A549 (cell line): ENCODE measurements at regions of chr16 and their contacts with region 1.

Region 1: DNA sequence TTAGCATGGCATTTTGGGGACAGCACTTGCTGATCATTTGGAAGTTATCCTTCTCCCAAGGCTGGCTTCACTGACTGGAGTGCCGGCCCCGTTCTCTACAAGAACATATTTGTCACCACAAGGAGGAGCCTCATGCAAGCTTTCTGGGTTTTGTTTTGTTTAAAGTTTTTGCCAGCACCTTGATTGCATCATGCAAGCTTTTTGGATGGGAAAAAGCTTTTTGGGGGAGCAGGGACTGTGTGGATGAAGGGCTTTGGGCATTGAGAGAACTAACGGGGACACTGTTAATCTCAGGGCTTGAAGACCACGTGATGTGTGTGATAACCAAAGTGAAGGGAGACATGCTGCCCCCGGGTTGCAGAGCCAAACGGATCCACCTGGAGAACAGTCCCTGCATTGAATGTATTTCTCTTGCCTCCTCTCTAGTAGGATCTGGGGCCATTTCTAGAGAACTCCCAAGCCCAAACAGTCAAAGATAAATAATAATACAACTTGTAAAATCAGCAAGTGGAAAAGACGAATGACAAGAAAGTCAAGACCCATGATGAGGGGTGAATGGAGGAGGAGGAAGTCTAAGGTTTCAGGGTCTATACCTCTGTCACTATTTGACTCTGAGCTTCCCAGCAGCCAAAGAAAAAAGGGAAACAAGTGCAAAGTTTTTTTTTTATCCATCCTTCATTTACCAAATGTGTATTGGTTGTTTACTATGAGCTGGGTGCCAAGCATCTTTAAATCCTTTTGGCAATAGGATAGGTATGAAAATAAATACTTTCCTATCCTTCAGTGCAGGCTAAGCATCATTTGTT is 17.2 kb downstream of the TMEM114 start:
- DNase-seq: peak; percentile 38 to 53
- ATAC-seq: peak; percentile 54 to 68; a peak in 2 of 6 replicates
- H3K4me3 ChIP-seq: peak overlapping the region; percentile 34; the same call in 2 of the 3 replicates
- H3K27ac ChIP-seq: peak overlapping the region; percentile 55 to 73; a peak in 4 of 6 replicates
- H3K4me1 ChIP-seq: peaks cover 10% of the 10 kb centered on the region; the same call in 2 of the 3 replicates
- CTCF ChIP-seq: peak; percentile 54
- EP300 ChIP-seq: no peak
- POLR2A ChIP-seq: no peak
- RAD21 ChIP-seq: peak; percentile 45 to 51

Region 2: DNA sequence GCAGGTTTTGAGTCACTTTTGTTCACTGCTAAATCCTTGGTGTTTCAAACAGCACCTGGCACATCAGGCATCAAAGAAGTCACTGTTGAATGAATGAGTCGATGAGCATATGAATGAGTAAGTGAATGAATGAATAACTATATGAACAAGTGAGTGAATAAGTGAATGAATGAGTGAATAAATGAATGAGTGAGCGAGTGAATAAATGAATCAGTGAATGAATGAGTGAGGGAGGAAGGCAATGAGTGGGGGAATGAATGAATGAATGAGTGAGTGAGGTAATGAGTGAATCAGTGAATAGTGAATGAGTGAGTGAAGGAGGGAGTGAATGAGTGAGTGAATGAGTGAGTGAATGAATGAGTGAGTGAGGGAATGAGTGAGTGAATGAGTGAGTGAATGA is 11.6 kb before region 1 on chr16:
- CTCF ChIA-PET with region 1: no interaction called
- POLR2A ChIA-PET with region 1: no interaction called
- DNase-seq: no peak
- ATAC-seq: no peak
- H3K4me3 ChIP-seq: no peak overlapping the region
- H3K27ac ChIP-seq: no peak overlapping the region
- H3K4me1 ChIP-seq: no peaks in the 10 kb centered on the region
- CTCF ChIP-seq: no peak
- EP300 ChIP-seq: no peak
- POLR2A ChIP-seq: no peak
- RAD21 ChIP-seq: no peak

Region 3: GRCh38 chr16:8634991-8635736 is 62.0 kb after region 1 on chr16:
- CTCF ChIA-PET with region 1: interaction called, 25 read pairs
- POLR2A ChIA-PET with region 1: no interaction called
- DNase-seq: peak; percentile 48 to 64
- ATAC-seq: peak; percentile 87 to 93
- H3K4me3 ChIP-seq: no peak overlapping the region
- H3K27ac ChIP-seq: no peak overlapping the region
- H3K4me1 ChIP-seq: no peaks in the 10 kb centered on the region
- CTCF ChIP-seq: peak; percentile 61
- EP300 ChIP-seq: no peak
- POLR2A ChIP-seq: no peak
- RAD21 ChIP-seq: peak in 1 of 2 experiments; percentile 47; a peak in 3 of 5 replicates

Region 4: DNA sequence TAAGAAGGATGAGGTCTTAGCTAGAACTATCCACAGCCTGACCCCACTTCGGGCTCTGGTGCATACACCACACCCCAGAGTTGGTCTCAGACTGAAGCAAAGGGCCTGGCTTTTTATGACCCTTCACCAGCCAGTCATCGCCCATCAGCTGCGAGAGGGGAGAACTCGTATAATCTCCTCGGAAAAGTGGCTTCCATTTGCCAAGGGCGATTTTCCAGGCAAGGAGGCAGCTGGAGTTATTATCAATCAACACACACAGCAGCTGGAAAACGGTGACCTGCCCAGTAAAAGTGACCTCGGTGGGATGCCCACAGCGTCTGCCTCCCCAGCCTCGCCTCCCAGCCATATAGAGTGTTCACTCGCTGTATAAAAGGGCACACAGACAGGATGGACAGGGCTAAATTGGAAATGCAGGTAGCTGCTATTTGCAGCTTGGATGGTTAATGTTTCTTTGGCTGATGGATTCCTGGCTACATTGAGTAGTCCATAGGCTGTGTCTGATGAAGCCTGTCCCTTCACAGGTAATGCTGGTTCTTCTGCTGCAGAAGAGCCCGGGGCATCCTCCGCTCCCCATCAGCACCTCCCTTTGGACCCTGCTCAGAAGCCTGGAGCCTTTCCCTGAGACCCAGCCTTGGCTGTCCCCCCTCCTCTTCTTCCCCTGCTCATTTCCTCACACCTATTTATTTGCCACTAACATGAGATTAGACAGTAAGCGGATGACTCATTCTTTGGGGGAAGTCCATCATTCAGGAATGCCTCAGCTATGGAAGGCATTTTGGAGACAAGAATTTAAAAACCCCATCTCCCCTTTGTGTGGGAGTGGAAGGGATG is 178.6 kb after region 1 on chr16:
- CTCF ChIA-PET with region 1: no interaction called
- POLR2A ChIA-PET with region 1: no interaction called
- DNase-seq: peak; percentile 39 to 55
- ATAC-seq: peak; percentile 81 to 82; a peak in 5 of 6 replicates
- H3K4me3 ChIP-seq: no peak overlapping the region
- H3K27ac ChIP-seq: no peak overlapping the region
- H3K4me1 ChIP-seq: peaks cover 10% of the 10 kb centered on the region
- CTCF ChIP-seq: no peak
- EP300 ChIP-seq: no peak
- POLR2A ChIP-seq: no peak
- RAD21 ChIP-seq: no peak

Region 5: DNA sequence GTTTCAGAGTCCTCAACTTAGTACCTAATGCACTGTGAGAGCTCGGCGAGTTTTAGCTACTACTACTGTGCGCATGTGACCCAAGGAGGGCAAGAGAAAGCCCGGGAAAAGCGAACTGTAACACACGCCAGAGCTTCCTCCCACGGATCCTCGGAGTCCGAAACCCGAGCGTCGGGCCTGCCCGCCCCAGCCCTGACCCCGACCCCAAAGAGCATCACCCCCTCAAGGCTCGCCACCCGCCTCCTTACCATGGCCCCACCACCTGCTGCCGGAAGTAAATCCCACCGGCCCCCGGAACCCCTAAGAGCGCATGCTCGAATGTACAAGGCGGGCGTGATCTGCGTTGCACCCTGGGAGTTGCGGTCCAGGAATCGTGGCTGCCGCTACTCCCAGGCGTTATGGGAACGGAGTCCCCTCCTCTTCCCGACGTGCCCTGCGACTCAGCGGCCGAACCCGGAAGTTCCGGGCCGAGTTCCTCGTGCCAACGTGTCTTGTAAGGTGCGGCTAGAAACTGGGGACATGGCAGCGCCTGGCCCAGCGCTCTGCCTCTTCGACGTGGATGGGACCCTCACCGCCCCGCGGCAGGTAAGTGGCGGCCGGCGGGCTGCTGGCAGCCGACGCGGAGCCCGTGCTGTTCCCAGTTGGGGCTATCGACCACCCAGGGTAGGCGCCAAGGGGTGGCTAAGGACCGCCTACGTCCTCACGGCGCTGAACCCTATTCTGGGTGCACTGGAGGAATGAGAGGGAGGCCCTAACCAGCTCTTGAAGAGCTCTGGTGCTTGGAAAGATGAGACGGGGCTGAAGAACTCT is 224.4 kb after region 1 on chr16 and contains the starts of genes PMM2 and TMEM186:
- CTCF ChIA-PET with region 1: interaction called, 11 read pairs
- POLR2A ChIA-PET with region 1: no interaction called
- DNase-seq: peak; percentile 96 to 98
- ATAC-seq: peak; percentile 97 to 98
- H3K4me3 ChIP-seq: peak within 1 kb of the TSS; percentile 88
- H3K27ac ChIP-seq: peak within 1 kb of the TSS; percentile 95 to 96
- H3K4me1 ChIP-seq: peaks cover 28% of the 10 kb centered on the region
- CTCF ChIP-seq: no peak
- EP300 ChIP-seq: no peak
- POLR2A ChIP-seq: peak; percentile 89
- RAD21 ChIP-seq: no peak
- polyA plus RNA-seq, gene PMM2: 46.4 and 56.6 TPM in 2 replicates
- polyA plus RNA-seq, gene TMEM186: 10.9 and 12.1 TPM in 2 replicates